ENCODE measurements at regions of chr1 and their contacts with region 1.

Region 1: DNA sequence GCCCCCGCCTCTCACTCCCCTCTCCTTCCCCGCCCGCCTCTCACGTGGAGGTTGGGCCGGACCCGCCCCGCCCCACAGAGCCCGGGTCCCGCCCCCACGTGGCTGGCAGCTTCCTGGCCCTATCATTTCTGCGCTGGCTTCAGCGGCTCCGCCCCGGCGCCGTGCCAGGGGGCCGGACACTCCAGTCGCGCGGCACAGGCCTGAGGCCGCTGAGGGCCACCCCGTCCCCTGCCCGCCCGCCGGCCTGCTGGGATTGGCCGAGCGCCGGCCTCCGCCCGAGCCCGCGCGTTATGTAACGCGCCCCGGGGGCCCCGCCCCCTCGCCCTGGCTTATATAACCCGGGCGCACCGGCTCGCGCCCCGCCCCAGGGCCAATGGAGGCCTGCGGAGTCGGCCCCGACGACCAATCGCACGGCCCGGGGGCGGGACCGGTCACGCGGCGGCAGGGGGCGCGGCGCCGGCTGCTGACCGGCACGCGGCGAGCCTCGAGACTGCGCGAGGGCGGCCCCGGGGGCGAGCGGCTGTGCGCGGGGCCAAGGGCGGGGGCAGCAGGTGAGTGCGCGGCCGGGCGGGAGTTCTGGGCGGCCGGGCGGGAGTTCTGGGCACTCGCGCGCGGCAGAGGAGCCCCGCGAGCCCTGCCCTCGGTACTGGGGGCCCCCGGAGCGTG is at the start of gene PER3:
- DNase-seq: peak; percentile 94 to 97
- ATAC-seq: peak; percentile 88 to 96 (median 89)
- H3K4me3 ChIP-seq: peak within 1 kb of the TSS; percentile 63
- H3K4me3 Mint-ChIP-seq: peak within 1 kb of the TSS; percentile 76
- H3K27ac ChIP-seq: peak within 1 kb of the TSS; percentile 76
- H3K27ac Mint-ChIP-seq: peak within 1 kb of the TSS; percentile 57 to 82
- H3K4me1 ChIP-seq: peaks cover 35% of the 10 kb centered on the region
- H3K4me1 Mint-ChIP-seq: peaks cover 21 to 25% of the 10 kb centered on the region in 2 donors
- H3K27me3 ChIP-seq: no peaks in the 10 kb centered on the region
- H3K27me3 Mint-ChIP-seq: no peaks in the 10 kb centered on the region
- CTCF ChIP-seq: no peak
- total RNA-seq, gene PER3: 9.1 to 20.8 (median 19.2) TPM

Region 2: DNA sequence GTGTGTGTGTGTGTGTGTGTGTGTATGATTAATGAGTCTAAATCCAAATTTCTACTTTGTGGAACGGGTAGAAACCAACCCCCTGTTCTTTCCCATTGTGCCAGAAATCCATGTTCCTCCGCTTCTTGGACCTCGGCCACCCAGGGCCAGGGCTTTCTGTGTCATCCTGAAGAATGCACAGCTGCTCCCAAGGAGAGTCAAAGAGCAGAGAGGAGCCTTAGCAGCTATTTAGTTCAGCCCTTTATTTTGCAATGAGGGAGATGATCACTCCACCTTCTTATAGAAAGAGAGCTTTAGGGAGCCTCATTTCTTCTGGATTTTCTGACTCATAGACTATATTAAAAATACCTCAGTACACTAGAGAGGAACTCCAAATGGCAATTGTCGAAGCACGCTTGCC is 502.1 kb before region 1 on chr1:
- intact Hi-C with region 1: no loop called
- DNase-seq: no peak
- ATAC-seq: no peak
- H3K4me3 ChIP-seq: no peak overlapping the region
- H3K4me3 Mint-ChIP-seq: no peak overlapping the region
- H3K27ac ChIP-seq: no peak overlapping the region
- H3K27ac Mint-ChIP-seq: no peak overlapping the region
- H3K4me1 ChIP-seq: no peaks in the 10 kb centered on the region
- H3K4me1 Mint-ChIP-seq: no peaks in the 10 kb centered on the region
- H3K27me3 ChIP-seq: no peaks in the 10 kb centered on the region
- H3K27me3 Mint-ChIP-seq: peaks cover 26 to 30% of the 10 kb centered on the region in 2 donors
- CTCF ChIP-seq: no peak

Region 3: GRCh38 chr1:7770997-7771822 is 12.7 kb before region 1 on chr1 and contains the start of gene VAMP3:
- intact Hi-C with region 1: loop called (anchors 1 kb)
- DNase-seq: peak; percentile 86
- ATAC-seq: peak; percentile 96 to 98 (median 97)
- H3K4me3 ChIP-seq: peak within 1 kb of the TSS; percentile 63
- H3K4me3 Mint-ChIP-seq: peak within 1 kb of the TSS; percentile 97
- H3K27ac ChIP-seq: peak within 1 kb of the TSS; percentile 79
- H3K27ac Mint-ChIP-seq: peak within 1 kb of the TSS; percentile 87 to 91
- H3K4me1 ChIP-seq: peaks cover 19% of the 10 kb centered on the region
- H3K4me1 Mint-ChIP-seq: peaks cover 24 to 31% of the 10 kb centered on the region in 2 donors
- H3K27me3 ChIP-seq: no peaks in the 10 kb centered on the region
- H3K27me3 Mint-ChIP-seq: peaks cover 7 to 21% of the 10 kb centered on the region in 2 donors
- CTCF ChIP-seq: no peak
- total RNA-seq, gene VAMP3: 86.9 to 110 (median 92.2) TPM

Measured in natural killer cell (primary cell).